Posterior cingulate gyrus (tissue), 11 donors: ENCODE measurements at regions of chr10 and their contacts with region 1.

Region 1: GRCh38 chr10:130190055-130190736 is 54.0 kb downstream of the GLRX3 start:
- DNase-seq: peak; percentile 72 to 98 (median 86)

Region 2: DNA sequence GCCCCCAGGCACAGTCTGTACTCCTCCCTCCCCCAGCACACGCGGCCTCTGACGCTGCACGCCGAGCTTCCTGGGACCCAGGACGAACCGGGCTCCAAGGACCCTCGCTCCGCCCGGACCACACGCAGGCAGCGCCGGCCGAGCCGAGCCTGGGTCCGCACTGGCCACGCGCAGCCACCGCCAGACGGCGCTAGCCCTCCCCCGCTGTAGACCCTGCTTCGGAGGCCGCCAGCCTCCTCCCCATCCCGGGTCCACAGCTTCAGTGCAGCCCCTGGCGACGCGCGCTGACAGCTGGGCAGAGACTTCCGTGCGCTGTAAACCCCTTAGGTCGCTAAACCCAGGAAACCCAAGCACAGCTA is 1122.3 kb after region 1 on chr10:
- intact Hi-C with region 1: loop called (anchors 10 kb)
- DNase-seq: peak in 4 of 10 donors; percentile 50 to 89 (median 86)

Region 3: DNA sequence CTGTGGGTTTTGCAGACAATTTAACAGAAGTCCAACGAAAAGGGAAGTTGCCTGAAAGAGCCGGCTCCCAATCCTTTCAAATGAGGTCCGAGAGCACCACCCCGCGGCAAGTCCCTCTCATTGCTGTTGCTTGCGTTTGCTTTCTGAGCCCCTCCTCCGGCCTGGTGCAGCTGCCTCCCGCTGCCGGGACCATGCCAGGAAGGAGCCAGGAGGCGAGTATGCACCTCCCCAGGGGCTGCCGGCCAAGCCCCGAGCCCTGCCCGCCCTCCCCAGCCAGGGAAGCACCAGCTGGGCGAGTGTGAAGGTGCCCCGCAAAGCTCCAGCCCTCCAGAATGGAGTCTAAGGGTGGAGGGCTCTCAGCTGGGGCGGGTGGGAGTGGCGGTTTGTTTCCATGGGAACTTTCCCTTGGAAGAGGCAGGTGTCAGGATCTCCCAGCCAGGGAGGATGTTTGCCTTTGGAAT is 1684.8 kb after region 1 on chr10:
- intact Hi-C with region 1: loop called (anchors 2 kb)
- DNase-seq: peak; percentile 77 to 98 (median 87)